Thyroid gland (tissue), 4 donors: ENCODE measurements at regions of chr11 and their contacts with region 1.

Region 1: DNA sequence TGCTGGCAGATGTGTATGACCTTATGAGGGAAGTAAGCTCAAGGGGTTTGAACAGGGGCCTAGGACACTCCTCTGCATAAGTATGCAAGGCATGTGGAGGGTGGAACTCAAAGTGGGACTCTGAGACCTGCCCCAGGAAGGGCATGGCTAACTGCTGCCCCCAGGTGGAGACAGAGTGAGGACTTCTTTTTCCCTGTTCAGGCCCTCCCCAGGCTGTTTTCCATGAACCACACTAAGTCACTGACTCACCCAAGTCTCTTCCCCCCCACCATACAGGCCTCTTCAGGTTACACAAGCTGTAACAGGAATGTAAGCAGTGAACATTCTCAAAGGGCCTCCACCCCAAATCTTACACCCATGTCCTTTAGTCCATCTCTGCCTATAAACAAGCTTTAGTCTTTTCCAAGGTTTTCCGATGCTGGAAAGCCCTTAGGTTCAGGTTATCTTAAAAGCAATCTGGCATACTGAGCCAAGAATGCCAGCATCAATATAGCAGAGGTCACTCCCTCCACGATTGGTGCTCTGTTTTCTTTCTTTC is 13.1 kb downstream of the EEF1G start:
- DNase-seq: peak; percentile 94 to 96
- H3K4me3 ChIP-seq: no peak overlapping the region
- H3K27ac ChIP-seq: peak overlapping the region; percentile 77 to 86 (median 79)
- H3K4me1 ChIP-seq: peaks cover 27 to 35% of the 10 kb centered on the region in 2 donors
- H3K27me3 ChIP-seq: no peaks in the 10 kb centered on the region
- CTCF ChIP-seq: peak; percentile 41 to 97 (median 92)
- POLR2A ChIP-seq: peak in 1 of 2 donors; percentile 17

Region 2: GRCh38 chr11:62421996-62422395 is 138.6 kb before region 1 on chr11:
- intact Hi-C with region 1: loop called (anchors 5 kb)
- DNase-seq: no peak
- H3K4me3 ChIP-seq: no peak overlapping the region
- H3K27ac ChIP-seq: no peak overlapping the region
- H3K4me1 ChIP-seq: peaks cover 3 to 9% of the 10 kb centered on the region in 2 donors
- H3K27me3 ChIP-seq: no peaks in the 10 kb centered on the region
- CTCF ChIP-seq: no peak
- POLR2A ChIP-seq: no peak

Region 3: DNA sequence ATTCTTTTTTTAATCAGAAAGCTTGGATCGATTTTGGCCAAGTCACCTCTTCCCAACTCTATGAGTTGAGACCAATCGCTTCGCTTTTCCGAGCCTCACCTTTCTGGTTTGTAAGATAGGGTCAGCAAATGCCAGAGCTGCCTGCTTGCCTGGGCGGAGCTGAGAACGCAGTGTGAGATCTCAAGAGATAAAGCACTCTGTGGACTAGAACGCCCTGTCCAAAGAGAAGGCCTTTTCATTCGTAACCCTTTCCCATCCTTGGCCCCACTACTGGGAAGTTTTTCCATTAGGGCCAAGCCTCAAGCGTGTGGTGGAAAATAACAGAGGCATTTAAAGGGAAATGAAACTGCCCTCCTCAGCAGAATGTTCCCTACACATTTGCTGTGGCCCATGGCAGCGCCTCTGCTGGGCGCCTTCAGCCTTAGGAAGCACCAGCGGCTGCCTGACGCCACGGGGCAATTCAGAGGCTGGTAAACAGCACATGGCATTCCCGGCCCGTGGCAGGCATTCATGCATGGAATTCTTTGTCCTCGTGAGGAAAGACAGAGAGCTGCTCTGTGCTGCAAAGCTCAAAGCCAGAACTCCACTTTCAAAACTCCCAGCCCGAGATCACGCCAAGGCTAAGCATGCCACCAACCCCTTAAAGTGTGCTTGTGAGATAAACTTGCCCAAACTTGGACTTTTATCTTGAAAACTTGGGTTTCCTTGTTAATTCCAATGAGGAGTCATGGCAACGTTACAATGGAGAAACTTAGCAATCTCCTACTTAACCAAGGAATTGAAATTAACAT is 52.2 kb before region 1 on chr11:
- intact Hi-C with region 1: no loop called
- DNase-seq: peak; percentile 94 to 96
- H3K4me3 ChIP-seq: no peak overlapping the region
- H3K27ac ChIP-seq: peak overlapping the region; percentile 82 to 86 (median 85)
- H3K4me1 ChIP-seq: peaks cover 31 to 52% of the 10 kb centered on the region in 2 donors
- H3K27me3 ChIP-seq: no peaks in the 10 kb centered on the region
- CTCF ChIP-seq: peak in 4 of 6 experiments; percentile 52 to 68 (median 60)
- POLR2A ChIP-seq: peak in 1 of 2 donors; percentile 52